ENCODE measurements at regions of chr5 and their contacts with region 1.

Region 1: DNA sequence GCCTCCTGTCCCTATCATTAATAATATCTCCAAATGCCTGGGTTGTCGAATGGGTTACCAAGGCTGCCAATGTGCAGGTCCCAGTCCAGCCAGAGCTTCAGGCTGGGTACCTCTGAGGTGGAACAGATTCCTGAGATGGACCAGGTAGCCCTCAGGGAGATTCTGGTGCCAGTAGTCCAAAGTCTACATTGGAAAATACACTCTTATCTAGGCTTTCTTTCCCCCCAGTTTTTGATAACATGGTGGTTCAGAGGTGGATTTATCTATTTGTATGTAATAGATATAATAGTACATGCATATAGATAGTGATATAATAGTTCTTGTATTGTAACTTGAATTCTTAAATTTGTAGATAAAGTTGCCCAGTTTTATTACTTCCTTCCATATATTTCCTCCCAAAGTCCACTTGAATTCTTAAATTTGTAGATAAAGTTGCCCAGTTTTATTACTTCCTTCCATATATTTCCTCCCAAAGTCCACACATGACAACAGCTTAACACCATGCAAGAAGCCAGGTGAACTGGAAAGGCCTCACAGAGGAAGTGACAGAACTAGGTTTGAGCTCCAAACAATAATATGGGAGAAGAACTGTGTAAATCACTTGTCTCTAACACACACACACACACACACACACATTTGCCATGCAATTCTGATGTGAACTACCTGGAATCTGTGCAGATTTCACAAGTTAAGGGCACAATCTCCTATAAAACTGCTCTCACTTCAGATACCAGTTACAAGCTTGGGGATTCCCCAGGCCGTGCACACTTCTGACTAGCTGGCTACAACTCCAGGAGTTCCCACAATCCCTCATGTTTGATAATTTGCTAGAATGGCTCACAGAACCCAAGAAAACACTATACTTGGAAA is 30.7 kb upstream of the ERAP1 start:
- DNase-seq: no peak
- H3K4me3 Mint-ChIP-seq: no peak overlapping the region
- H3K27ac Mint-ChIP-seq: no peak overlapping the region
- H3K4me1 Mint-ChIP-seq: peaks cover 24% of the 10 kb centered on the region
- H3K27me3 Mint-ChIP-seq: no peaks in the 10 kb centered on the region

Region 2: DNA sequence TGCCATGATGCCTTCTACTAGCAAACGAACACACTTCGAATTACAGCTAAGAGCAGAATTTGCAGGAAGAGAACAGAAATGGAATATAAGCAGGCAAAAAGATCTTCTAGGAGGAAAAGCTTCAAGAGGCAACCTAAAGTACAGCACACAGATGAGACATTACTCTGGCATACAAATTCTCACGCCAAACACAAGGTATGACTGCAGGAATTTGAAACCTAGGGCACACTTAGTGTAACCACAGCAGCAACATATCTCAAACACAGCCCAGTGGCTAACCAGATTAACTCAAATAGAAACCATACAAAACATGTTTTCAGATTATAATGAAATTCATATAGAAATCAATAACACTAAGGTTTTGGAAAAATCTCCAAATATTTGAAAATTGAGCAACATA is 1454.1 kb after region 1 on chr5:
- intact Hi-C with region 1: loop called (anchors 5 kb)
- DNase-seq: no peak
- H3K4me3 Mint-ChIP-seq: no peak overlapping the region
- H3K27ac Mint-ChIP-seq: no peak overlapping the region
- H3K4me1 Mint-ChIP-seq: no peaks in the 10 kb centered on the region
- H3K27me3 Mint-ChIP-seq: peaks cover 2% of the 10 kb centered on the region